ENCODE measurements at regions of chr7 and their contacts with region 1.

Region 1: GRCh38 chr7:116236020-116236630 is 25.8 kb downstream of the TES start:
- DNase-seq: no peak
- H3K4me3 ChIP-seq: no peak overlapping the region
- CTCF ChIP-seq: peak; percentile 8

Region 2: DNA sequence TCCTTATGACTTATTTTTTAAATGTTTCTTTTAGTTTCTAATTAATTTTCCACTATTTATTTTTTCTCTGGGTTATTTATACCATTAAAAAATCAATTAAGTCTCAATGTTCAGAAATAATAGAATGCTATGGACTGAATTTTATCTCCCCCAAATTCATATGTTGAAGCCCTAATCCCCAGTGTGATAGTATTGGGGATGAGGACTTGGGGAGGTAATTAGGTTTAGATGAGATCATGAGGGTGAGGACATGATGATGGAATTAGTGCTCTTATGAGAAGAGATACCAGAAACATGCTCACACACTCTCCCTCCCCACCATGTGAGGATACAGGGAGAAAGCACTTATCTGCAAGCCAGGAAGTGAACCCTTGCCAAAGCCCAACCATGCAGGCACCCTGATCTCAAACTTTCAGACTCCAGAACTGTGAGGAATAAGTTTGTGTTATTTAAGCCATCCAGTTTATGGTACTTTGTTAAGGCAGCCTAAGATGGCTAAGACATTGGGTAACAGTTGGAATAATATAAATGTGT is 1111.6 kb before region 1 on chr7:
- CTCF ChIA-PET with region 1: no interaction called
- POLR2A ChIA-PET with region 1: no interaction called
- DNase-seq: no peak
- H3K4me3 ChIP-seq: no peak overlapping the region
- CTCF ChIP-seq: no peak

Region 3: GRCh38 chr7:116173051-116174028 is 62.8 kb before region 1 on chr7:
- CTCF ChIA-PET with region 1: interaction called, 567 read pairs
- POLR2A ChIA-PET with region 1: no interaction called
- DNase-seq: no peak
- H3K4me3 ChIP-seq: no peak overlapping the region
- CTCF ChIP-seq: no peak

Region 4: GRCh38 chr7:116195451-116195850 is 40.7 kb before region 1 on chr7:
- CTCF ChIA-PET with region 1: interaction called, 16 read pairs
- POLR2A ChIA-PET with region 1: interaction called, 3 read pairs
- DNase-seq: no peak
- H3K4me3 ChIP-seq: no peak overlapping the region
- CTCF ChIP-seq: no peak

Region 5: GRCh38 chr7:116211006-116211912 is 24.9 kb before region 1 on chr7:
- CTCF ChIA-PET with region 1: interaction called, 17 read pairs
- POLR2A ChIA-PET with region 1: interaction called, 5 read pairs
- DNase-seq: peak; percentile 84
- H3K4me3 ChIP-seq: peak overlapping the region; percentile 80
- CTCF ChIP-seq: no peak

Region 6: GRCh38 chr7:116218051-116218645 is 18.0 kb before region 1 on chr7:
- CTCF ChIA-PET with region 1: interaction called, 17 read pairs
- POLR2A ChIA-PET with region 1: no interaction called
- DNase-seq: no peak
- H3K4me3 ChIP-seq: no peak overlapping the region
- CTCF ChIP-seq: no peak

Region 7: GRCh38 chr7:116224492-116225098 is 11.5 kb before region 1 on chr7:
- CTCF ChIA-PET with region 1: interaction called, 21 read pairs
- POLR2A ChIA-PET with region 1: no interaction called
- DNase-seq: no peak
- H3K4me3 ChIP-seq: no peak overlapping the region
- CTCF ChIP-seq: no peak